ENCODE measurements at regions of chr3 and their contacts with region 1.

Region 1: GRCh38 chr3:58177747-58178527 is 32.8 kb downstream of the DNASE1L3 start:
- DNase-seq: peak; percentile 91
- H3K4me3 Mint-ChIP-seq: peak overlapping the region; percentile 52
- H3K27ac Mint-ChIP-seq: no peak overlapping the region
- H3K4me1 Mint-ChIP-seq: peaks cover 20% of the 10 kb centered on the region
- H3K27me3 Mint-ChIP-seq: peaks cover 7% of the 10 kb centered on the region

Region 2: GRCh38 chr3:58217209-58217811 is 39.4 kb after region 1 on chr3:
- CTCF ChIA-PET with region 1: interaction called, 10 read pairs
- POLR2A ChIA-PET with region 1: no interaction called
- DNase-seq: peak; percentile 64
- H3K4me3 Mint-ChIP-seq: no peak overlapping the region
- H3K27ac Mint-ChIP-seq: no peak overlapping the region
- H3K4me1 Mint-ChIP-seq: peaks cover 16% of the 10 kb centered on the region
- H3K27me3 Mint-ChIP-seq: peaks cover 7% of the 10 kb centered on the region

Measured in activated CD4-positive, alpha-beta T cell treated with anti-CD3 and anti-CD28 coated beads, Interleukin-2, amount 10 ng/mL, durations not matched to agents 7 days and 5 days (primary cell).